Left colon (tissue), 2 donors: ENCODE measurements at regions of chr13 and their contacts with region 1.

Region 1: GRCh38 chr13:37602747-37603381 is 4.3 kb upstream of the POSTN start:
- DNase-seq: no peak
- ATAC-seq: no peak

Region 2: GRCh38 chr13:37074703-37075102 is 528.2 kb before region 1 on chr13:
- intact Hi-C with region 1: loop called in 1 of 2 experiments (anchors 10 kb)
- DNase-seq: no peak
- ATAC-seq: no peak

Region 3: GRCh38 chr13:37109051-37109678 is 493.7 kb before region 1 on chr13:
- intact Hi-C with region 1: loop called in 1 of 2 experiments (anchors 10 kb)
- DNase-seq: no peak
- ATAC-seq: no peak

Region 4: GRCh38 chr13:37277435-37278144 is 325.3 kb before region 1 on chr13:
- intact Hi-C with region 1: no loop called
- DNase-seq: no peak
- ATAC-seq: no peak

Region 5: GRCh38 chr13:37492741-37493514 is 109.9 kb before region 1 on chr13:
- intact Hi-C with region 1: no loop called
- DNase-seq: no peak
- ATAC-seq: no peak

Region 6: GRCh38 chr13:38045307-38046048 is 442.6 kb after region 1 on chr13:
- intact Hi-C with region 1: no loop called
- DNase-seq: no peak
- ATAC-seq: peak; percentile 67